PC-3 (cell line): ENCODE measurements at regions of chr4 and their contacts with region 1.

Region 1: DNA sequence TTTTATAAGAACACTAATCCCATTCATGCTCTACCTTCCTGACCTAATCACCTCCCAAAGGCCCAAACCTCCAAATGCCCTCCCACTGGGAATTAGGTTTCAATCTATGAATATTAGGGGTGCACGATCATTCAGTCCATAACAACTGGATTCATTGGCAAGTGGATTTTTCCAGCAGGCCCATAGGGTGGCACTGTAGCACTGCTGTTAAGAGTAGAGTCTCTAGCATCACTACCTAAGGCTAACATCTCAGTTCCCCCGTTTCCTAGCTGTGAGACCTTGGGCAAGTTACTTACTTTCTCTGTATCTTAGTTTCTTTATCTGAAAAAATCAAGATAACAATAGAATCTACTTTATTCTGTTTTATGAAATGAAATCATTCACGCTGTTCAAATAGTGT is 315.8 kb downstream of the STIM2 start:
- DNase-seq: peak; percentile 59
- ATAC-seq: peak; percentile 81
- H3K4me3 ChIP-seq: no peak overlapping the region
- H3K27ac ChIP-seq: no peak overlapping the region
- H3K4me1 ChIP-seq: no peaks in the 10 kb centered on the region
- H3K27me3 ChIP-seq: no peaks in the 10 kb centered on the region
- CTCF ChIP-seq: peak; percentile 77

Region 2: GRCh38 chr4:27357283-27357682 is 180.9 kb after region 1 on chr4:
- CTCF ChIA-PET with region 1: no interaction called
- POLR2A ChIA-PET with region 1: no interaction called
- intact Hi-C with region 1: loop called (anchors 2 kb)
- DNase-seq: peak; percentile 41
- ATAC-seq: peak; percentile 60; the same call in 1 of the 2 replicates
- H3K4me3 ChIP-seq: peak overlapping the region; percentile 24; the same call in 1 of the 2 replicates
- H3K27ac ChIP-seq: no peak overlapping the region
- H3K4me1 ChIP-seq: peaks cover 15% of the 10 kb centered on the region
- H3K27me3 ChIP-seq: no peaks in the 10 kb centered on the region
- CTCF ChIP-seq: peak; percentile 63; the same call in 1 of the 2 replicates